Right ventricle myocardium superior (tissue), 1 donor: ENCODE measurements at regions of chr1 and their contacts with region 1.

Region 1: DNA sequence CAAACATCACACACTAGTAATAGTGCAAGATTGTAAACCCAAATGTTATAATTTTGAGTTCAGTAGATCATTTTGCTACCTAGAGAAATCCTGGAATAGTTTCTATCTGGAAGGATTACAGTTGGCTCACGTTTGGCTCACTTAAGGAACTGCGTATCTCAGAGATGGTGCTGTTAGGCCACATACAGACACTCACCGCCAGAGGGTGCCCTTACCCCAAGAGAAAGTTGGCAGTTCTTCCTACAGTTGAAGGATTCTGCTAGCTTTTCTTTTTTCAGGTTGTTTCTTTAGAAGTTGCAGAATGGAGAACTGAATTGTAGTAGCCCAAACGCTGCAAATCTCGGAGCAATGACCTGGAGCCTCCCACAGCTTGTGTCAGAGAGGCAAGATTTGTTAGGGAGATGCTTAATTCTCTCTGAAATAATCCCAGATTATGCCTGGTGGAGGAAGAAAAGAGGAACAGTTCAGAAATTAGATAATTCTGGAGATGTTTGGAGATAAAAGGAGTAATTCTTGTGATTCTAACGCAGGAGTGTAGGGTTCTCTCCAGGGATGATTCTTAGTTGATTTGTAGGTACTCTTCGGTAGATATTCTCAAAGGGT is 87.9 kb upstream of the PAPPA2 start:
- DNase-seq: peak; percentile 77
- ATAC-seq: peak; percentile 82

Region 2: GRCh38 chr1:176880954-176881595 is 506.0 kb after region 1 on chr1:
- intact Hi-C with region 1: loop called (anchors 10 kb)
- DNase-seq: peak; percentile 71
- ATAC-seq: peak; percentile 91

Region 3: GRCh38 chr1:177020851-177021589 is 646.0 kb after region 1 on chr1:
- intact Hi-C with region 1: no loop called
- DNase-seq: no peak
- ATAC-seq: peak; percentile 43